Mammary epithelial cell (primary cell): ENCODE measurements at regions of chr6 and their contacts with region 1.

Region 1: DNA sequence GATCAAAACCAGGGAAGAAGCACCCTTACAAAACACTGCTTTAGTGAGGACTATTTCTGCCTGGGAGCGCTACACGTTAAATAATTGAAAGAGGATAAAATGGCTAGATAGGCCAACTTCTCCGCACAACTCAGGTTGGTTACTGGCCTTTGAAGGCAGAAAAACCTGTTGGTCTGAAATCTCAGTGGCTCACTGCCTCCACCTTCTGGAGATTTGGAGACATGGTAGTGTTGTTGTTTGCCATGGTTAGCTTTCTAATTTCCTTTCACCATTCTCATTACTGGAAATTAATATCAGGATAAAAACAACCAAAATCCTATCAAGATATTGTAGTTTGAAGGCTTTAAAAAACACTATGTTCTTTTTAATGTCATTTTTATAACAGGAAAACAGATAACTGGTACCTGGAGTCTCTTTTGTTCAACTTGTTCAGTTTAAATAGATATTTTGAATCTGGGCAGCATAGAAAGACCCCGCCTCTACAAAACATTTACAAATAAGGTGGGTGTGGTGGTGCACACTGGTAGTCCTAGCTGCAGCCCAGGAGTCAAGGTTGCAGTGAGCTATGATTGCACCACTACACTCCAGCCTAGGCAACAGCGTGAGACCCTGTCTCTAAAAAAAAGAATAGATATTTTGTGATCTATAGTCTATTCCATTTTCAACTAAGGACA is 27.5 kb upstream of the BCLAF1 start:
- DNase-seq: peak; percentile 57
- H3K4me3 ChIP-seq: no peak overlapping the region
- H3K27ac ChIP-seq: no peak overlapping the region
- H3K4me1 ChIP-seq: no peaks in the 10 kb centered on the region
- H3K27me3 ChIP-seq: peaks cover 3% of the 10 kb centered on the region
- CTCF ChIP-seq: peak; percentile 90 to 93

Region 2: GRCh38 chr6:135451693-135452092 is 865.5 kb before region 1 on chr6:
- CTCF ChIA-PET with region 1: no interaction called
- dilution Hi-C with region 1: no loop called
- in situ Hi-C with region 1: no loop called
- intact Hi-C with region 1: loop called (anchors 2 kb)
- DNase-seq: peak; percentile 10
- H3K4me3 ChIP-seq: no peak overlapping the region
- H3K27ac ChIP-seq: no peak overlapping the region
- H3K4me1 ChIP-seq: no peaks in the 10 kb centered on the region
- H3K27me3 ChIP-seq: no peaks in the 10 kb centered on the region
- CTCF ChIP-seq: peak; percentile 60 to 62

Region 3: GRCh38 chr6:135506270-135506997 is 810.7 kb before region 1 on chr6:
- CTCF ChIA-PET with region 1: no interaction called
- dilution Hi-C with region 1: no loop called
- in situ Hi-C with region 1: no loop called
- intact Hi-C with region 1: loop called (anchors 10 kb)
- DNase-seq: peak; percentile 8
- H3K4me3 ChIP-seq: no peak overlapping the region
- H3K27ac ChIP-seq: no peak overlapping the region
- H3K4me1 ChIP-seq: no peaks in the 10 kb centered on the region
- H3K27me3 ChIP-seq: no peaks in the 10 kb centered on the region
- CTCF ChIP-seq: peak; percentile 30 to 58

Region 4: DNA sequence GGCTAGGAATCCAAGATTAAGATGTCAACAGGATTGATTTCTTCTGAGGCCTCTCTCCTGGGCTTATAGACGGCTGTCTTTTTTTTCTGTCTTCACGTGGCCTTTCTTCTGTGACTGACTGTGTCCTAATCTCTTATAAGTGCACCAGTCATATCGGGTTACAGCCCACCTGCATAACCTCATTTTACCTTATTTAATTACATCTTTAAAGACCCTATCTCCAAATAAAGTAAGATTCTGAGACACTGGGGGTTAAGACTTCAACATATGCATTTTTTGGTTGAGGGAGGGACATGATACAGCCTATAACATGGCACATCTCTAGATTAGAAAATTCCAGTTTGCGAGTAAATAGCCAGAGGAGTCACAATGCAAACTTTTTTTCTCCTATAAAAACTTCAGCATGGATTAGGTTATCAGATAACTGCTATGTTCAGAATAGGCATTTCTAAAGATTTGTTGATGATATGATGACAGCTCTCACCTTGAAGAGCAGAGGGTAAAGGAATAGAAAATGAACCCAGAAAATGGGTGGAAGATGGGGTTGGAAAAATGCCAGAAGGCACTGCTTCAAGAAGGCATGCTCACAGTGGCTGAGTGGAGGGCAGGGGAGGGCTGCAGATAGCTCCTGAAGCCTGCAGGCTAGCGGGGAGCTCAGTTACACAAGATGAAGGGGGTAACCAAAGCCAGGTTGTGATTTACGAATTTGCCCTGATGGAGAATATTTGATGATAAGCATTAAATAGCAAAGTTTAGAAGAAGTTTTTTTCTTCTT is 474.4 kb before region 1 on chr6:
- CTCF ChIA-PET with region 1: no interaction called
- dilution Hi-C with region 1: no loop called
- in situ Hi-C with region 1: no loop called
- intact Hi-C with region 1: no loop called
- DNase-seq: no peak
- H3K4me3 ChIP-seq: no peak overlapping the region
- H3K27ac ChIP-seq: no peak overlapping the region
- H3K4me1 ChIP-seq: no peaks in the 10 kb centered on the region
- H3K27me3 ChIP-seq: peaks cover 2% of the 10 kb centered on the region
- CTCF ChIP-seq: no peak

Region 5: GRCh38 chr6:136249811-136250685 is 67.1 kb before region 1 on chr6 and contains the start of gene MTFR2:
- CTCF ChIA-PET with region 1: no interaction called
- dilution Hi-C with region 1: no loop called
- in situ Hi-C with region 1: no loop called
- intact Hi-C with region 1: loop called (anchors 1 kb)
- DNase-seq: peak; percentile 99
- H3K4me3 ChIP-seq: peak within 1 kb of the TSS; percentile 78 to 98 (median 90)
- H3K27ac ChIP-seq: peak within 1 kb of the TSS; percentile 76
- H3K4me1 ChIP-seq: peaks cover 6% of the 10 kb centered on the region
- H3K27me3 ChIP-seq: no peaks in the 10 kb centered on the region
- CTCF ChIP-seq: no peak
- total RNA-seq, gene MTFR2: 2.0 to 7.3 TPM

Region 6: GRCh38 chr6:136289579-136290409 is 27.4 kb before region 1 on chr6 and contains the start of gene BCLAF1:
- CTCF ChIA-PET with region 1: no interaction called
- dilution Hi-C with region 1: no loop called
- in situ Hi-C with region 1: no loop called
- intact Hi-C with region 1: loop called (anchors 2 kb)
- DNase-seq: peak; percentile 98
- H3K4me3 ChIP-seq: peak within 1 kb of the TSS; percentile 87 to 97 (median 95)
- H3K27ac ChIP-seq: peak within 1 kb of the TSS; percentile 100
- H3K4me1 ChIP-seq: peaks cover 17% of the 10 kb centered on the region
- H3K27me3 ChIP-seq: no peaks in the 10 kb centered on the region
- CTCF ChIP-seq: no peak
- total RNA-seq, gene BCLAF1: 104 to 143 TPM